Sigmoid colon (tissue), 7 donors: ENCODE measurements at regions of chr4 and their contacts with region 1.

Region 1: DNA sequence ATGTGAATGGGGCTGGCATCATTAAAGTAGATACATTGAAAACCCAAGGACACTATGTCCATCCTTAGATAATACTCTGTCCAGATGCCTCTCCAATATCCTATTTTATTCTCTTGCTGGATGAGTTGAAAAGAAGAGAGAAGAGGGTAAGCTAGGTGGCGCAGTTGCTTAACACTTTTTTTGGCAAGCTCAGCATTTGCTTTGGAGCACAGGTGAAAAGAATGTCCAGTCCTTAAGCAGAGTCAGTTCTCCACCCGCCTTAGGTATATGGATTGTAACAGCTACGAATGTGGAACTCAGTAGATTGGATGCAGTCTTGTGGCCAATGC is 208.4 kb downstream of the NWD2 start:
- DNase-seq: no peak
- H3K4me3 ChIP-seq: peak overlapping the region; percentile 32 to 57 (median 52)
- H3K27ac ChIP-seq: no peak overlapping the region
- H3K4me1 ChIP-seq: peaks cover 0 to 14% (median 12%) of the 10 kb centered on the region in 4 donors
- H3K27me3 ChIP-seq: peaks cover 0 to 50% (median 9%) of the 10 kb centered on the region in 3 donors
- CTCF ChIP-seq: peak in 2 of 4 experiments; percentile 46 to 58
- EP300 ChIP-seq: no peak
- POLR2A ChIP-seq: no peak

Region 2: DNA sequence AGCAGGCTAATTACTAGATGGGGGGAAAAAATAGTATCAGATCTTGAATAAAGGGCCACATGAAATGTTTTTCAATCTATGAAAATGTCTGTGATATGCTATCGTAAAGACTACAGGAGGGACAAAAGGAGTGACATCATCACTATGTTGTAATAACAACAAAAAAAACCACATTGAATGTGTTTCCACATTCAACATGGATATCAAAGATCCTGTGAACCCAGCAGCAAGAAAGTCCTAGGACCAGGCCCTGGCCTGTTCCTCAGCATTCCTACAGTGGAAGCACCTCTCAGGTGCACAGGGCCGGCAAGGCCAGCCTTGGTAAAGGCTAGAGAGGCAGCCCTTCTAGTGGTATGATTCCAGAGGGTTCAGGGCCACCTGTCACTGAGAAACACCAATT is 114.9 kb after region 1 on chr4:
- intact Hi-C with region 1: loop called (anchors 2 kb)
- DNase-seq: no peak
- H3K4me3 ChIP-seq: no peak overlapping the region
- H3K27ac ChIP-seq: no peak overlapping the region
- H3K4me1 ChIP-seq: no peaks in the 10 kb centered on the region
- H3K27me3 ChIP-seq: no peaks in the 10 kb centered on the region
- CTCF ChIP-seq: no peak
- EP300 ChIP-seq: no peak
- POLR2A ChIP-seq: no peak